ENCODE measurements at regions of chr5 and their contacts with region 1.

Region 1: DNA sequence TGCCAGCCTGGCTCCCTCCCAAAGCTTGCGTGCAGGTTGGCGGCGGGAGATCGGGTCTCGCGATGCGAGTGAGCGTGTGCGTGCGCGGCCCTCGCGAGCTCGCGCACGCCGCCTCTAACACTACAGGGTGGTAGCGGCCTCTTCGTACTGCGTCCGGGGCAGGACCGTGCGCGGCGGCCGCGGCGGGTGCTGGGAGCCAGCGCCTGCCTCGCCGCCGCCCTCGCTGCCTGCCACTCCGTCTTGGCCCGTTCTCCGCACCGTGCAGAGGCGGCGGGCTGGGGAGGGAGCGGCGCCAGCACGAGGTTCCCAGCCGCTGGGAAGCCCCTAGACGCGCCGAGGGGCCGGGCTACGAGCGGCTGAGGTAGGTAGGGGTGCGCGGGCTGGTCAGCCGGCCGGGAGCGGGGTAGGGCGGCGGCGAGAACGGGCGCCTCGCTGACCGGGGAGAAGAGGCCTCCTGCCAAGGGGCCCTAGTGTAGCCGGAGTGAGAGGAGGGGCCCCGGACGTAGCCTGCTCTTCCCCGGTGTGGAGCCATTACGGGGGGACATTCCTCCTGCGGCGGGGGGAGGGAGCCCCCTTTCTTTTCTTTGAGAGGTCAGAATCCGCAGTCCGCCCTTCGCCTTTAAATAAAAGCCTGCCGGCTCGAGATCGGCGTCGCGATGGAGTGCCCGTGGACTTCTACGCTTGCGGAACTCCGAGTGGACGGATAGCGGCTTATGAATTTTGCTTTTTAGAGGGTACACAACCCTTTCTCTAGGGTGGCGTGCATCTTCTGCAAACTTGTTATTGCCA is at the start of gene C5orf24:
- H3K4me3 ChIP-seq: peak within 1 kb of the TSS; percentile 87
- H3K27ac ChIP-seq: peak within 1 kb of the TSS; percentile 97
- H3K4me1 ChIP-seq: peaks cover 9% of the 10 kb centered on the region; the same call in 1 of the 2 replicates
- CTCF ChIP-seq: 0 out of 2 replicates have a peak, but pooled peaks have one; percentile 10

Region 2: DNA sequence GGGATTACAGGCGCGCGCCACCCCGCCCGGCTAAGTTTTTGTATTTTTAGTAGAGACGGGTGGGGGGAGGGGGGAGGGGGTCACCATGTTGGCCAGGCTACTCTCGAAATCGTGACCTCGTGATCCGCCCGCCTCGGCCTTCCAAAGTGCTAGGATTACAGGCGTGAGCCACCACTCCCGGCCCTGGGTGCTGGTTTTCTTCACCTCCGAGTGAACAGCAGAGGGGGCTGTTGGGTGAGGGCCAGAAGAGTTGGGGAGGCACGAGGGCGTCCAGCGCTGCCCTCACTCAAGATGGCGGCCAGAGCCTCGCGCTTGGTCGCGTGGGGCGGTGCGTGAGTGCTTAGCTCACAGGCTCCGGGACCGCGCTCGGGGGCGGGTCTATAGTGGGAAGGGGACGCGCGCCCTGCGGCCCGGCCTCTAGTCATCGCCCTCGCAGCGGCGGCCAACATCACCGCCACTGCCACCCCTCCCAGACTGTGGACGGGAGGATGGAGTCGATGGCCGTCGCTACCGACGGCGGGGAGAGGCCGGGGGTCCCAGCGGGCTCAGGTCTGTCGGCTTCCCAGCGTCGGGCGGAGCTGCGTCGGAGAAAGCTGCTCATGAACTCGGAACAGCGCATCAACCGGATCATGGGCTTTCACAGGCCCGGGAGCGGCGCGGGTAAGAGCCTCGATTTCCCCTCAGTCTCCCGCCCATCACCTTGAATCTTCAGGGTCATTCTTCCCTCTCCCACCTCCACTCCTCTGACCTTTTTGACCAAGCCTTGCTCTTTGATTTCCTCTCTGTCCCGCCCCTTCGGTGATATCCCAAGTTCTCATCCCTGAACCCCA is 107.7 kb before region 1 on chr5 and contains the start of gene CAMLG:
- CTCF ChIA-PET with region 1: no interaction called
- POLR2A ChIA-PET with region 1: interaction called, 14 read pairs
- H3K4me3 ChIP-seq: peak within 1 kb of the TSS; percentile 84
- H3K27ac ChIP-seq: peak within 1 kb of the TSS; percentile 54
- H3K4me1 ChIP-seq: peaks cover 10% of the 10 kb centered on the region
- CTCF ChIP-seq: peak; percentile 97

Region 3: GRCh38 chr5:134758504-134759341 is 87.3 kb before region 1 on chr5 and contains the start of gene DDX46:
- CTCF ChIA-PET with region 1: interaction called, 6 read pairs
- POLR2A ChIA-PET with region 1: interaction called, 10 read pairs
- H3K4me3 ChIP-seq: peak within 1 kb of the TSS; percentile 97
- H3K27ac ChIP-seq: peak within 1 kb of the TSS; percentile 51; the same call in 1 of the 2 replicates
- H3K4me1 ChIP-seq: 0 out of 2 replicates have a peak, but pooled peaks cover 5% of the 10 kb centered on the region
- CTCF ChIP-seq: peak; percentile 99

Region 4: GRCh38 chr5:134873987-134874830 is 28.2 kb after region 1 on chr5 and contains the start of gene TXNDC15:
- CTCF ChIA-PET with region 1: interaction called, 4 read pairs
- POLR2A ChIA-PET with region 1: interaction called, 16 read pairs
- H3K4me3 ChIP-seq: peak within 1 kb of the TSS; percentile 93
- H3K27ac ChIP-seq: peak within 1 kb of the TSS; percentile 92
- H3K4me1 ChIP-seq: no peaks in the 10 kb centered on the region; the same call in 1 of the 2 replicates
- CTCF ChIP-seq: peak; percentile 31

Region 5: GRCh38 chr5:134904630-134905245 is 58.7 kb after region 1 on chr5 and contains the start of gene PCBD2:
- CTCF ChIA-PET with region 1: interaction called, 7 read pairs
- POLR2A ChIA-PET with region 1: interaction called, 10 read pairs
- H3K4me3 ChIP-seq: peak within 1 kb of the TSS; percentile 83
- H3K27ac ChIP-seq: peak within 1 kb of the TSS; percentile 96
- H3K4me1 ChIP-seq: no peaks in the 10 kb centered on the region
- CTCF ChIP-seq: peak; percentile 96

Measured in HEK293 (cell line).